HCT116 (cell line): ENCODE measurements at regions of chr10 and their contacts with region 1.

Region 1: DNA sequence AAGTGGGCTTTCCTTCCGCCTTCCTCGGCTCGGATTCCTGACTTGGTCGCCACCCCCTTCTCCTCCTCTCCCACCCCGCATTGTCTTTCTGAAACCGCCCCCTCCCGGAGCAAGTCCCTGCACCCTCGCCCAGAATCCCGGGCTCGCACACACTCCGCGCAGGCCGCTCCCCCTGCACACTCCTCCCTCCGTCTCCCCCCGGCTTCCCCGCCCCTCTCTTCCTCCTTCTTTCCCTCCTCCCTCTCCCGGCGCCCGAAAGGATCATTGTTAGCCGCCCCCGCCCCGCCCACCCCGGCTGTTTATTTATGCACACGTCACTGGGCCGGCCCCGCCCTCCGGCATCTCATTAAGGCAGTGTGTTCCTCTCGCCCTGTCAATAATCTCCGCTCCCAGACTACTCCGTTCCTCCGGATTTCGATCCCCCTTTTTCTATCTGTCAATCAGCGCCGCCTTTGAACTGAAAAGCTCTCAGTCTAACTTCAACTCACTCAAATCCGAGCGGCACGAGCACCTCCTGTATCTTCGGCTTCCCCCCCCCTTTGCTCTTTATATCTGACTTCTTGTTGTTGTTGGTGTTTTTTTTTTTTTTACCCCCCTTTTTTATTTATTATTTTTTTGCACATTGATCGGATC is at the start of gene TCF7L2:
- DNase-seq: peak; percentile 100
- ATAC-seq: peak; percentile 84
- H3K4me3 ChIP-seq: peak within 1 kb of the TSS; percentile 73 to 78
- H3K27ac ChIP-seq: peak within 1 kb of the TSS; percentile 100
- H3K4me1 ChIP-seq: peaks cover 39 to 47% of the 10 kb centered on the region in 2 experiments
- H3K27me3 ChIP-seq: no peaks in the 10 kb centered on the region
- CTCF ChIP-seq: no peak
- POLR2A ChIP-seq: no peak
- RAD21 ChIP-seq: no peak
- total RNA-seq, gene TCF7L2: 164 TPM

Region 2: DNA sequence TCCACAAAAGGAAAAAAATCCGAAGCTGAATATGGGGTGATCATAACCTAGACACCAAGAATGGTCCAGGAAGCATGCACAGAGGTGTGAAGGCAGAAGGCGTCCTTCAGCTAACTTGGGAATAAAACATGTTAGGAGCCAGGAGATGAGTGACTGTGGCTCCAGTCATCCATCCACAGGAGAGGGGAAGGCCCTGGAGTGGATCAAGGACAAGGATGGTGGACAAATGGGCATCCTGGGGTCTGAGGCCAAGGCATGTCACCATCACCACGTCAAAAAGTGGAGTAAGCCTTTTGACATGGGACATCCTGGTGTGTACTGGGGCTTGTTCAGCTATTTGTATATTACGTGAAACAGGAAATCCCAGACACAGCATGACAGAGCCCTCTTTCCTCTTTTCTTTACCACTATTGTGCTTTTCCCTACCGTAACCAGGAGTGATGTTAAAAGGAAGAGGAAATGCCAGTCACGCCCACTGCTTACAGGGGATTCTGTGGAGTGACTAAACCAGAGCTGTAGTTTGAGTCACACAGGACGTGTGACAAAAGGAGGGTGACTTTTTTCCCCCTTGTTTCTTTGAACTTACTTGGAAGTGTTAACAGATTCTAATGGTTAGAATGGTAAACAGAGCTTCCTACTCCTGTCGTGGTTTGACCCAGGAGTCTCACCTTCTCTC is 560.7 kb before region 1 on chr10:
- CTCF ChIA-PET with region 1: no interaction called
- POLR2A ChIA-PET with region 1: no interaction called
- RAD21 ChIA-PET with region 1: no interaction called
- intact Hi-C with region 1: loop called (anchors 10 kb)
- DNase-seq: peak; percentile 99
- ATAC-seq: peak; percentile 83
- H3K4me3 ChIP-seq: 0 out of 4 replicates have a peak overlapping the region, but pooled peaks of 1 of the 2 experiments have one; percentile 7
- H3K27ac ChIP-seq: peak overlapping the region; percentile 77
- H3K4me1 ChIP-seq: peaks cover 94 to 97% of the 10 kb centered on the region in 2 experiments
- H3K27me3 ChIP-seq: no peaks in the 10 kb centered on the region
- CTCF ChIP-seq: no peak
- POLR2A ChIP-seq: no peak
- RAD21 ChIP-seq: no peak

Region 3: GRCh38 chr10:112565434-112566053 is 384.4 kb before region 1 on chr10:
- CTCF ChIA-PET with region 1: no interaction called
- POLR2A ChIA-PET with region 1: no interaction called
- RAD21 ChIA-PET with region 1: no interaction called
- intact Hi-C with region 1: loop called (anchors 2 kb)
- DNase-seq: peak; percentile 67
- ATAC-seq: peak; percentile 81
- H3K4me3 ChIP-seq: no peak overlapping the region
- H3K27ac ChIP-seq: peak overlapping the region; percentile 0; the same call in 1 of the 2 replicates
- H3K4me1 ChIP-seq: peaks cover 32 to 41% of the 10 kb centered on the region in 2 experiments
- H3K27me3 ChIP-seq: no peaks in the 10 kb centered on the region
- CTCF ChIP-seq: peak; percentile 81 to 90 (median 87)
- POLR2A ChIP-seq: no peak
- RAD21 ChIP-seq: peak; percentile 96

Region 4: DNA sequence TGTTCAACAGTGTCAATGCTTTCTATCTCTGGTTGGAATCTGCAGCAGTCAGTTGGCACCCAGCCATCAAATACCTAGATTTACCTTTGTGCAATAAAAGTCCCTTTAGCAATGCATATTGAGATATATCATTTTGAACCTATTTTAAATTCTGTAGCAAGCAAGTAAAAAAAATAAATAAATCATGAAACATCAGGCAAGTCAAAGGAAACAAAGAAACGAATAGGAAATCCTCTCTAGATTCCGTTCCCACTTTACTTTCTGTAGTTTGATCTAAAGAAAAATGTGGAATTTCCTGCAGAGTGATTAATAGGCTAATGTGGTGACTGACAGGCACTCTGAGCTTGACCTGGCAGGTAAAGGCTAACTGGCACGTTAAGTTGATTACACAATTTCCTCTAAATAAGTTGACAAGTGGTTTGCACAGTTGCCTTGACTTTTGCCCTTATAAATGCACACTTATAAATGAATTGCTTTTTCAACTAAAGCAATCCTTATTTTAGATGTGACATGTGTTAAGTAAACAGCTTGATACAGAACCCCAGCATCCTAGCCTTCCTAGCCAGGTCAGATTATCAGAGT is 208.1 kb before region 1 on chr10:
- CTCF ChIA-PET with region 1: no interaction called
- POLR2A ChIA-PET with region 1: no interaction called
- RAD21 ChIA-PET with region 1: no interaction called
- intact Hi-C with region 1: loop called (anchors 2 kb)
- DNase-seq: peak; percentile 52
- ATAC-seq: peak; percentile 64
- H3K4me3 ChIP-seq: peak overlapping the region in 1 of 2 experiments; percentile 3; a peak in 1 of 4 replicates
- H3K27ac ChIP-seq: peak overlapping the region; percentile 56
- H3K4me1 ChIP-seq: peaks cover 38 to 58% of the 10 kb centered on the region in 2 experiments
- H3K27me3 ChIP-seq: no peaks in the 10 kb centered on the region
- CTCF ChIP-seq: no peak
- POLR2A ChIP-seq: no peak
- RAD21 ChIP-seq: 0 out of 2 replicates have a peak, but pooled peaks have one; percentile 30

Region 5: DNA sequence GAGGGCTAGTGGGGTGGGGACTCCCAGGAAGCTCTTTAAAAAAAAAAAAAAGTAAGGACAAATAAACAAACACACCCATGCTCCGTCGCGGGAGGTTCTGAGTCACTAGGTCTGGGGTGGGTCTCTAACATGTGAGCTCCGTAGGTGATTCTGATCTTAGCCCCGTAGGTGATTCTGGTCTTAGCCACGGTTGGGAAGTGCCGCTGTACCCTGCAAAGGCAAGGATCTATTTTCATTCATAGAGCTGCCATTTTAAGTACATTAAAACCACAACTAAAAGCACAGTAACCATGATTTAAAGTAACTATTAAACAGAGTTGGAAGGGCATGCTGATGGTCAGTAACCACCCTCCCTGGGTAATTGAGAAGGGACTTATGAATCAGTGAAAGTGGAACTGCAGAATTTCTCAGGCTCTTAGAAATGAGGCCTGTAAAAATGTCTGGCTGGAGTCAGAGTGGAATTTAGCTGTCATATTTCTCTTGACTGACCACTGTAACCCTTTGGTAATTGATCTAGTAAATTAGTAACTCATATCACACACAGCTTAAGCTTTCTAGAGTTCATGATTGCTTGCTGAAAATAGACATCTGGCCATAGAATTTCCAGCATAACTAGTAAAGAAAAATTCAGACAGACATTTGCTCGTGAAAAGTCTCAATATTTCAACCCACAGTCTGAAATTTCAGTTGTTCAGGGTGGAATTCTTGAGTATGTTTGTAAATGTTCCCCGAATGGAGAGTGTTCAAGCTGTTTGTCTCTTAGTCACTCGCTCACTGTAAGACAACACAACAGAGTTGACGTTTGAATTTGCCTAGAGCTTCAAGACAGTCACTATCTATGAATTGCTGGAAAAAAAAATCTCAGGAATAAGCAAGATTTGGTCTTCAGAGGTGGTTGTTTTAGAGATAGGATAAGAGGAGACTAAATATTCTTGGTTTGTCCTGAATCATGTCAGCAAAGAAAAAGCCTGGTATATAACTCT is 34.1 kb before region 1 on chr10:
- CTCF ChIA-PET with region 1: no interaction called
- POLR2A ChIA-PET with region 1: interaction called, 10 read pairs
- RAD21 ChIA-PET with region 1: interaction called in 1 of 2 experiments, 3 read pairs
- intact Hi-C with region 1: no loop called
- DNase-seq: peak; percentile 80
- ATAC-seq: peak; percentile 76
- H3K4me3 ChIP-seq: peak overlapping the region; percentile 1 to 38
- H3K27ac ChIP-seq: peak overlapping the region; percentile 39; the same call in 1 of the 2 replicates
- H3K4me1 ChIP-seq: peaks cover 33 to 66% of the 10 kb centered on the region in 2 experiments
- H3K27me3 ChIP-seq: no peaks in the 10 kb centered on the region
- CTCF ChIP-seq: no peak
- POLR2A ChIP-seq: no peak
- RAD21 ChIP-seq: 0 out of 2 replicates have a peak, but pooled peaks have one; percentile 4

Region 6: DNA sequence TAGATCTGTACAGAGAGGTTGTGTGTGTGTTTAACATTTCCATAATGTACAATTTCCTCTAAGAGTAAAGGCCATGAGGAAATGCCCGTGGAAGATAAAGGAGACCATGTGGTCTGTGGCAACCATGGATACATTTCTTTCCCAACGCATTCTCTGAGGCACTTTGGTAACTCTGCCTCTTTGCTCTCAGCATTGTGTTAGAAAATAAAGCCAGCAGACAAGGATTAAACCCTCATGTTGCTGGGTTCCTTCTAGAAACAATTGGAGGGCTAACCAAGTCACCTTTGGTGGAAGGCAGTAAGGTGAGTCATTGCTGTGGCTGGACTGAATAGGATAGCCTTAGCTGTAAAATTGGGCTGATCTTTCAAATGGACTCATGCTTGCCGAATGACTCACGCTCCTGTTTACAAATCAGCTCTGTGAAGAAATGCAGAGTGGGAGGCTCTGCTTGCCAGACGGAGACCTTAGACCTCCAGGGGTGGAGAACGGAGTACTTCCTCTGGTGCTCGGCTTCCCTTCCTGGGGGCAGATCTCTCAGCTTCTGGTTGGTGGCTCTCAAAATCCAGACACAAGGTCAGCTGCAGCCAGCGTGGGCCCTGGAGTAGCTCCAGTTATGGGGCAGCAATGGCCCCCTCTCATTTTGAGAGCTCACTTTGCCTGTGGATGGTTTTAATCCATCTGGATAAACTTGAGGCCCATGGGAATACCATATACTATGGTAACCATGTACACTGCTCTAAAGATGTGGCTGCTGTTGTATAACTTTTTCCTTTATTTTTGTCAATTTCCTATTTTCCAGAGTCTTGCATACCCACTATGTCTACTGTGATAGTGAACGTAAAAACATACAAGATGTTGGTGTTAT is 137.4 kb after region 1 on chr10:
- CTCF ChIA-PET with region 1: no interaction called
- POLR2A ChIA-PET with region 1: no interaction called
- RAD21 ChIA-PET with region 1: interaction called in 1 of 2 experiments, 5 read pairs
- intact Hi-C with region 1: loop called (anchors 5 kb)
- DNase-seq: peak; percentile 100
- ATAC-seq: peak; percentile 92
- H3K4me3 ChIP-seq: peak overlapping the region in 1 of 2 experiments; percentile 30; a peak in 2 of 4 replicates
- H3K27ac ChIP-seq: peak overlapping the region; percentile 92
- H3K4me1 ChIP-seq: peaks cover 93 to 95% of the 10 kb centered on the region in 2 experiments
- H3K27me3 ChIP-seq: no peaks in the 10 kb centered on the region
- CTCF ChIP-seq: no peak
- POLR2A ChIP-seq: no peak
- RAD21 ChIP-seq: no peak

Region 7: DNA sequence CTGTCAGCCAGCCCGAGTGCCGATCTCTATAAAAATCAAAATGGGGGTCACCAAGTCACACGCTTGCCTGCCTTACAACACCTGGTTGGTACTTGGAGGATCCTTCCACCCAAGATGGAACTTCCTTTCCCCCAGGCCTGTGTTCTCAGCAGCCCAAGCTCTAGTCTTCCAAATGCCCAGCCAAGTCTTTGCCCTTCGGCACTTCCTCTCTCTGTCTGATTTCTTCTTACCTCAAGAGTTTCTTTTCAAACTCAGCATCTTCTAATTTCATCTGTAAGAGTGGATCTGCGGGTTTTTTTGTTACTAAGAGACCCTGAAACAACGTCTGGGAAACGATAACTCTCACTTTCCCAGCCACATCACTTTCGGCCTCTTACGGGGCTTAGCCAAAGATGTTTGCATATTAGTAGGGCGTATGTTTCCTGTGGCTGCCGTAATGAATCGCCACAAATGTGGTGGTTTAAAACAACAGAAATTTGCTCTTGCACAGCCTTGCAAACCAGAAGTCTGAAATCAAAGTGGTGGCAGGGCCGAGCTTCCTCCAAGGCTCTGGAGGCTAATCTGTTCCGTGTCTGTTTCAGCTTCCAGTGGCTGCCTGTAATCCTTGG is 220.0 kb after region 1 on chr10:
- CTCF ChIA-PET with region 1: no interaction called
- POLR2A ChIA-PET with region 1: no interaction called
- RAD21 ChIA-PET with region 1: no interaction called
- intact Hi-C with region 1: no loop called
- DNase-seq: no peak
- ATAC-seq: 0 out of 2 replicates have a peak, but pooled peaks have one; percentile 4
- H3K4me3 ChIP-seq: no peak overlapping the region
- H3K27ac ChIP-seq: no peak overlapping the region
- H3K4me1 ChIP-seq: no peaks in the 10 kb centered on the region
- H3K27me3 ChIP-seq: no peaks in the 10 kb centered on the region
- CTCF ChIP-seq: no peak
- POLR2A ChIP-seq: no peak
- RAD21 ChIP-seq: no peak